HEK293 (cell line): ENCODE measurements at regions of chr19 and their contacts with region 1.

Region 1: DNA sequence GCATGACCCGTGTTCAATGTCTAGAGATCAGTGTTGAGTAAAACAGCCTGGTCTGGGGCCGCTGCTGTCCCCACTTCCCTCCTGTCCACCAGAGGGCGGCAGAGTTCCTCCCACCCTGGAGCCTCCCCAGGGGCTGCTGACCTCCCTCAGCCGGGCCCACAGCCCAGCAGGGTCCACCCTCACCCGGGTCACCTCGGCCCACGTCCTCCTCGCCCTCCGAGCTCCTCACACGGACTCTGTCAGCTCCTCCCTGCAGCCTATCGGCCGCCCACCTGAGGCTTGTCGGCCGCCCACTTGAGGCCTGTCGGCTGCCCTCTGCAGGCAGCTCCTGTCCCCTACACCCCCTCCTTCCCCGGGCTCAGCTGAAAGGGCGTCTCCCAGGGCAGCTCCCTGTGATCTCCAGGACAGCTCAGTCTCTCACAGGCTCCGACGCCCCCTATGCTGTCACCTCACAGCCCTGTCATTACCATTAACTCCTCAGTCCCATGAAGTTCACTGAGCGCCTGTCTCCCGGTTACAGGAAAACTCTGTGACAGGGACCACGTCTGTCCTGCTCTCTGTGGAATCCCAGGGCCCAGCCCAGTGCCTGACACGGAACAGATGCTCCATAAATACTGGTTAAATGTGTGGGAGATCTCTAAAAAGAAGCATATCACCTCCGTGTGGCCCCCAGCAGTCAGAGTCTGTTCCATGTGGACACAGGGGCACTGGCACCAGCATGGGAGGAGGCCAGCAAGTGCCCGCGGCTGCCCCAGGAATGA is 1.5 kb upstream of the CEACAM5 start:
- H3K4me3 ChIP-seq: peak overlapping the region; percentile 30
- H3K27ac ChIP-seq: no peak overlapping the region
- H3K4me1 ChIP-seq: peaks cover 2% of the 10 kb centered on the region; the same call in 1 of the 2 replicates
- CTCF ChIP-seq: peak; percentile 100

Region 2: GRCh38 chr19:41505105-41505504 is 201.8 kb before region 1 on chr19:
- CTCF ChIA-PET with region 1: no interaction called
- POLR2A ChIA-PET with region 1: no interaction called
- H3K4me3 ChIP-seq: no peak overlapping the region
- H3K27ac ChIP-seq: no peak overlapping the region
- H3K4me1 ChIP-seq: peaks cover 14% of the 10 kb centered on the region
- CTCF ChIP-seq: no peak

Region 3: DNA sequence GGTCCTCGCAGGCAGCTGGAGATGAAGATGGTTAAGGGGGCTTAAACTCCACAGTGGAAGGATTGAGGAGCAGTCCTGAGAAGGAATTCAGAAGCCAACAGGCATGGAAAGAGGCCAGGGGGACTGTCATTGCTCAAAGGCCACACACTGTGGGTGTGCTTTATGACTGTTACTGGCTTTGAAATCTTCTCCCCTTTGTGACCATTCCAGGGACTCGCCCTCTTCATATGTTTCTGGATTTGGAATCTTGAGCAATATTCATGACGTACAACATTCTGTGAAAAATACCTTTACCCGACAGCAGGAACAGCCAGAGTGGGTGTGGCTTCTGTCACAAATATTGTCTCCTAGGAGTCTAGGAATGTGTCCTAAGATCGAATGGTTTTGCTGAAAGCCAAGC is 35.4 kb before region 1 on chr19:
- CTCF ChIA-PET with region 1: interaction called, 11 read pairs
- POLR2A ChIA-PET with region 1: no interaction called
- H3K4me3 ChIP-seq: no peak overlapping the region
- H3K27ac ChIP-seq: no peak overlapping the region
- H3K4me1 ChIP-seq: no peaks in the 10 kb centered on the region
- CTCF ChIP-seq: no peak

Region 4: DNA sequence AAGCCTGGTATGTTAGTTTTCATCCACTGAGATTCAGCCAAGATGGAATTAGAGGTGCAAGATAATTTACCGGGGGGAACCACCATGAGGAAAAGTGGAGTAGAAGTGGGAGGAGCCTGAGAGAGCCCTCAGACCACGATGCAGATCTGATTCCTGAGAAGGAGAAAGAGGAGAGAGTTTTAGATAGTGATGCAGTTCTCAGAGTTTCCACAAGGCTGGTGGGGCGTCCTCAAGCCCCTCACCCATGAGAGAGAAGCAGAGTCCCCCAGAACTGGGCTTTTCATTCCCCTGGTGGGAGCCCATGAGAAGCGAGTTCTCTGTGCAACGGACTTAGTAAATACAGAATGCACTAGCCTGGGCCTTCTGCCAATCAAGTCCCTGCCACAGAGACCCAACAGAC is 19.6 kb after region 1 on chr19:
- CTCF ChIA-PET with region 1: interaction called, 27 read pairs
- POLR2A ChIA-PET with region 1: no interaction called
- H3K4me3 ChIP-seq: no peak overlapping the region
- H3K27ac ChIP-seq: no peak overlapping the region
- H3K4me1 ChIP-seq: no peaks in the 10 kb centered on the region
- CTCF ChIP-seq: no peak

Region 5: DNA sequence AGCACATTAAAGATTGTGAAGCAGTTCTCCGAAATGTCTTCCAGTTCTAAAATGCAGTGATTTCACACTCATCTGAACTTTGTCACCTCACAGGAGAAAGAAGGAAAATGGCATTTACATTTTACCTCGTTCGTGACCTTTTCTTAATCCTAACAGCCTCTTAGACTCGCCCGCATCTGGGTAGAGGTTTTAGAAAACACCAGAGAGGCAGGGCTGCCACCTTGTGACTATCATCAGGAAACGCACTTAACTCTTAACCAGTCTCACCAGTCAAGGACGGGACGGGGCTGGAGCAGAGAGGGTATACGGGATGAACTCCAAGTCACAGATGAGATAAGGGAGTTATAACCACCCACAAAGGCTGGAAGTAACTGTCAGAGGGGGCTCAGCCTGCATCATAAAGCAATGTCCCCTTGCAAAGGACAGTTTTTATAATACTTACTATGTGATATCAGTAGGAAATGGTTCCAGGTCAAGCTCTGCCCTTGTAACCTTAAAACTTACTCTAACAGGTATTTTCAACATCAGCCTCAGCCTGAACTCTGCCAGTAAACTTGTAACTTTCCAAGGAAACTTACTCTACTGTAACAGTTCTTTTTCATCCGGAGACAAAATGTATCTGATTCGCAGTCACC is 39.8 kb after region 1 on chr19:
- CTCF ChIA-PET with region 1: interaction called, 121 read pairs
- POLR2A ChIA-PET with region 1: no interaction called
- H3K4me3 ChIP-seq: no peak overlapping the region
- H3K27ac ChIP-seq: no peak overlapping the region
- H3K4me1 ChIP-seq: peaks cover 8% of the 10 kb centered on the region; the same call in 1 of the 2 replicates
- CTCF ChIP-seq: peak; percentile 47

Region 6: DNA sequence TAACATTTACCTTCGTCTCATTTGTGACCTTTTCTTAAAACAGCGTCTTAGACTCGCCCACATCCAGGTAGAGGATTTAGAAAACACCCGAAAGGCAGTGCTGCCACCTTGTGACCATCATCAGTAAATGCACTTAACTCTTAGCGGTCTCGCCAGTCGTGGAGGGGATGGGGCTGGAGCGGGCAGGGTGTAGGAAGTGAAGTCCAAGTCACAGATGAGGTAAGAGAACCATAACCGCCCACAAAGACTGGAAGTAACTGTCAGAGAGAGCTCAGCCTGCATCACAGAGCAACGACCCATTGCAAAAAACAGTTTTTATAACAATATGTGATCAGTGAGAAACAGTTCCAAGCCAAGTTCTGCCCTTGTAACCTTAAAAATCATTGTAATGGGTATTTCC is 78.7 kb after region 1 on chr19:
- CTCF ChIA-PET with region 1: interaction called, 35 read pairs
- POLR2A ChIA-PET with region 1: no interaction called
- H3K4me3 ChIP-seq: no peak overlapping the region
- H3K27ac ChIP-seq: no peak overlapping the region
- H3K4me1 ChIP-seq: peaks cover 3% of the 10 kb centered on the region; the same call in 1 of the 2 replicates
- CTCF ChIP-seq: peak; percentile 70

Region 7: GRCh38 chr19:41811036-41811435 is 104.1 kb after region 1 on chr19:
- CTCF ChIA-PET with region 1: interaction called, 17 read pairs
- POLR2A ChIA-PET with region 1: no interaction called
- H3K4me3 ChIP-seq: no peak overlapping the region
- H3K27ac ChIP-seq: no peak overlapping the region
- H3K4me1 ChIP-seq: no peaks in the 10 kb centered on the region
- CTCF ChIP-seq: no peak